HEK293 (cell line): ENCODE measurements at regions of chr9 and their contacts with region 1.

Region 1: DNA sequence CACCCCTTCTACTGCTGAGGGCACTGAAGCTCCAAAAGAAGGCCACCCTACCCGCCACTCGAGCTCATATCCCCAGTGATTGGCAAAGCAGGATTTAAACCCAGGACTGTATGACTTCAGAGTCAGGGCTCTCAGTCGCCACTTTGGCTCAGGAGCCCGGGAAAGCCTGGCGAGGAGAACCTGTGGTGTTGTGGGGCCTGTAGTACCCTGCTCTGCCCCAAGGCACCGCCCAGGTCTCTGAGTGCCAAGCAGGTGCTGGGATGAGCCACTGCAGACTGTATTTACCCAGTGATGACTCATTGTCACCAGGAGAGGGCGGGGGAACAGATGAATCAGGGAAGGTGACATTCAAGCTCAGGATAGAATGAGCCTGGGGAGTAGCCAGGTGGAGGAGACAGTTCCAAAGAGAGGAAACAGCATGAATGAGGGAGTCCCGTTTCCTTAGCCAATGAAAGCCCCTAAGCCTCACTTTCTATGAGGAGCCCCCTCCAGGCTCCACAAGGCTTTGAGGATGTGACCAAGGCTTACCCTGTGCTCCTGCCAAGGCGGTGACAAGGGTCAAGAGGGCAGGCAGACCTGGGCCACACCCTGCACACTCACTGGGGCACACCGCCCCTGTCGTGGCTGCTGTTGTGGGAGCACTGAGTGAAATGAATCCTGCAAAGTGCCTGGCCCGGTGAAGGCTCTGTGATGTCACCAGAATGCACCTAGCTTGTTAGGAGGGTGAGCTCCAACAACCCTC is 17.8 kb upstream of the DPM2 start:
- H3K4me3 ChIP-seq: no peak overlapping the region
- H3K27ac ChIP-seq: no peak overlapping the region; the same call in 1 of the 2 replicates
- H3K4me1 ChIP-seq: peaks cover 8% of the 10 kb centered on the region
- CTCF ChIP-seq: peak; percentile 58

Region 2: DNA sequence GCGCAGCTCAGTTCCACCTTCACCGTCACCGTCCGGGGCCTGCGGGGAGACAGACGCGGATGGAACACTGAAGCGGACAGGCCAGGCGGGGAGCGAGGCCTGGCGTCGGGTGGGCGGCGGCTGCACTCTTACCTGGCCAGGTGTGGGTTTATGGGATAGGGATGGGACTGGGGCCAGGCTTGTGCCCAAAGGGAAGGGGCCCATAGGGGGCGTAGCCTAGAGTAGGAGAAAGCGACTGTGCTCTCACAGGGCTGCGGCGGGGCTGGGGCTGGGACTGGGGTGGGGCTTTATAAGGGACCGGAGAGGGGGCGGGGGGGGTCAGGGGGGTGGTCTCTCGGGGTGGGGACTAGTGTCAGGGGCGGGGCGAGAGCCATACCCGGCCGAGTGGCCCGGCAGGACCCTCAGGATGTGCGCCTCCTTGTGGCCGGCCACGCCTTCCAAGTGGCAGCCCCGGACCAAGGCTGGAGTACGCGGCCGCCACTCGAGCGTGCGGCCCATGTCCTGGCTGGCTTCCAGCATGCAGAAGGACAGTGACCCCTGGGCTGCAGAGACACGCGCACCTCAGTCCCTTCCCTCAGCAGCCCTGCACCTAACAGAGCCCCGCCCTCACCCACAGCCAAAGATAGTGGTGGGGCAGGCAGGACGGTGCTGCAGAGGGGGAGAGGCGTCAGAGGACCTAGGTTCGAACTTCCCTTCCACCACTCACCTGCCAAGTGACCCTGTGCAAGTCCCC is 130.0 kb before region 1 on chr9:
- CTCF ChIA-PET with region 1: no interaction called
- POLR2A ChIA-PET with region 1: no interaction called
- H3K4me3 ChIP-seq: no peak overlapping the region
- H3K27ac ChIP-seq: no peak overlapping the region
- H3K4me1 ChIP-seq: no peaks in the 10 kb centered on the region
- CTCF ChIP-seq: peak; percentile 30; the same call in 1 of the 2 replicates

Region 3: DNA sequence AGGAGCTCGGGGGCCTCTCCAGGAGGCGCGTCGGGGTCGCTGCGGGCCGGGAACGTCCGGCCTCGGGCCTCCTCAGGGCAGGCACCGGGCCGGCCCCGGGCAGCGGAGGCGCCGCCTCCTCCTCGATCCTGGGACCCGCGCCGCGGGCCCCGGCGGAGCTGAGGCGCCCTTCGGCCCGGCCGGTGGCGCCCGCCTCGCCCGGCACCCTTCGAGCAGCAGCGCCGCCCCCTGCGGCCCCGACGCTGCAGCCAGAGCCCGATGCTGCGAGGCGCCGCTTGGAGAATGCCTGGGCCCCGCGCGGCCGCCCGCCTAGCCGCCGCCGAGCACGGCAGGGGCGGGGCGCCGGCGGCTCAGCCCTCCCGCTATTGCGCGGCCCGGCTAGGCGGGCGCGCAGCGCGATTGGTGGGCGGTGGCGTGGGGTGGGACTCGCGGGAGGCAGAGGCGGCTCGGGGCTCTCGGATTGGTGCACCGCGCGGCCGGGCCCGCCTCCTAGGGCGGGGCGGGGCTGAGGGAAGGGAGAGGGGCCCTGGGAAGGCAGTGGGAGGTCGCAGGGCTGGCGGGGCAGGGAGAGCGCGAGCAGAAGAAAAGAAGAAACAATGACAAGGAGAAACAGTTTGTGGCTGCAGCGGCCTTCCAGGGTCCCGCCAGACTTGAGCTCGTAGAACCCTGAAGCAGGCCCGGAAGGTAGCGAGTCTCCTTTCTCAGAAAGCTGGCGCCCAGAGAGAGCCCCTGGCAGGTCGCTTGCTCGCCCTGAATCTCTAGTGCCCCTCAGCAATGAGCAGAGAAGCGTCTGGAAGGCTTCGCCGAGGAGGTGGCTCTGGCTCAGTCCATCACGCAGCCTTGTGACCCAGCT is 25.5 kb after region 1 on chr9 and contains the start of gene EEIG1:
- CTCF ChIA-PET with region 1: interaction called, 10 read pairs
- POLR2A ChIA-PET with region 1: interaction called, 19 read pairs
- H3K4me3 ChIP-seq: peak within 1 kb of the TSS; percentile 66
- H3K27ac ChIP-seq: peak within 1 kb of the TSS; percentile 81
- H3K4me1 ChIP-seq: peaks cover 6% of the 10 kb centered on the region; the same call in 1 of the 2 replicates
- CTCF ChIP-seq: no peak